ENCODE measurements at regions of chr6 and their contacts with region 1.

Region 1: DNA sequence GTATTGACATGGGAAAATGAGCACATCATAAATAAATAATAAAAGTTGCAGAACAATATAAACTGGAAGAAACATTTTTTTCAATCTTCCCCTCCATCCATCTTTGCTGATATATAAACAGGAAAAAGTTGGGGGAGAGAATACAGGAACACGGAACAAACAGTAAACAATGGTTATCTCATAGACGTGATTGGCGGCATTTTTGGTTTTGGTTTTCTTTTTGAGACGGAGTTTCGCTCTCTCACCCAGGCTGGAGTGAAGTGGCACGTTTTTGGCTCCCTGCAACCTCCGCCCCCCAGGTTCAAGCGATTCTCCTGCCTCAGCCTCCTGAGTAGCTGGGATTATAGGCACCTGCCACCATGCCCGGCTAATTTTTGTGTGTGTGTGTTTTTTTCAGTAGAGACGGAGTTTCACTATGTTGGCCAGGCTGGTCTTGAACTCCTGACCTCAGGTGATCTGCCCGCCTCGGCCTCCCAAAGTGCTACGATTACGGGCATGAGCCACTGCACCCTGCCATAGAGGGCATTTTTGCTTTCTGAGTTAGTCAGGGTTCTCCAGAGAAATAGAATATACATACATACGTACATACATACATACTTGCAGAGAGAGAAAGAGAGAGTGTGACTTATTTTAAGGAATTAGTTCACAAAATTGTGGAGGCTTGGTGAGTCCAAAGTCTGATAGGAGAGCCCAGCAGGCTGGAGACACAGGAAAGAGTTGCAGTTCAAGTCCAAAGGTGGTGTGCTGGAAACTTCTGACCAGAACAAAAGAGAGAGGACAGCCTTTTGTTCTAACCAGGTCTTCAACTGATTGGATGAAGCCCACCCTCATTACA is 22.6 kb downstream of the GNL1 start:
- DNase-seq: peak; percentile 70
- H3K4me3 Mint-ChIP-seq: peak overlapping the region; percentile 29
- H3K27ac Mint-ChIP-seq: no peak overlapping the region
- H3K4me1 Mint-ChIP-seq: peaks cover 44% of the 10 kb centered on the region
- H3K27me3 Mint-ChIP-seq: no peaks in the 10 kb centered on the region

Region 2: GRCh38 chr6:30483677-30484279 is 49.9 kb before region 1 on chr6:
- intact Hi-C with region 1: loop called (anchors 2 kb)
- DNase-seq: peak; percentile 86
- H3K4me3 Mint-ChIP-seq: no peak overlapping the region
- H3K27ac Mint-ChIP-seq: no peak overlapping the region
- H3K4me1 Mint-ChIP-seq: peaks cover 41% of the 10 kb centered on the region
- H3K27me3 Mint-ChIP-seq: peaks cover 44% of the 10 kb centered on the region

Region 3: GRCh38 chr6:30489081-30490025 is 44.3 kb before region 1 on chr6 and contains the start of gene HLA-E:
- intact Hi-C with region 1: loop called (anchors 1 kb)
- DNase-seq: peak; percentile 98
- H3K4me3 Mint-ChIP-seq: peak within 1 kb of the TSS; percentile 100
- H3K27ac Mint-ChIP-seq: peak within 1 kb of the TSS; percentile 97
- H3K4me1 Mint-ChIP-seq: peaks cover 52% of the 10 kb centered on the region
- H3K27me3 Mint-ChIP-seq: no peaks in the 10 kb centered on the region
- total RNA-seq, gene HLA-E: 484 and 488 TPM in 2 replicates

Region 4: GRCh38 chr6:30500421-30501355 is 33.0 kb before region 1 on chr6:
- intact Hi-C with region 1: loop called (anchors 1 kb)
- DNase-seq: peak; percentile 72
- H3K4me3 Mint-ChIP-seq: peak overlapping the region; percentile 54
- H3K27ac Mint-ChIP-seq: peak overlapping the region; percentile 58
- H3K4me1 Mint-ChIP-seq: peaks cover 32% of the 10 kb centered on the region
- H3K27me3 Mint-ChIP-seq: no peaks in the 10 kb centered on the region

Region 5: GRCh38 chr6:30508890-30509736 is 24.6 kb before region 1 on chr6:
- intact Hi-C with region 1: loop called (anchors 2 kb)
- DNase-seq: peak; percentile 89
- H3K4me3 Mint-ChIP-seq: peak overlapping the region; percentile 59
- H3K27ac Mint-ChIP-seq: peak overlapping the region; percentile 88
- H3K4me1 Mint-ChIP-seq: peaks cover 45% of the 10 kb centered on the region
- H3K27me3 Mint-ChIP-seq: no peaks in the 10 kb centered on the region

Region 6: GRCh38 chr6:30515932-30516753 is 17.5 kb before region 1 on chr6:
- intact Hi-C with region 1: loop called (anchors 1 kb)
- DNase-seq: peak; percentile 97
- H3K4me3 Mint-ChIP-seq: peak overlapping the region; percentile 83
- H3K27ac Mint-ChIP-seq: peak overlapping the region; percentile 97
- H3K4me1 Mint-ChIP-seq: peaks cover 44% of the 10 kb centered on the region
- H3K27me3 Mint-ChIP-seq: no peaks in the 10 kb centered on the region

Region 7: GRCh38 chr6:30814136-30815040 is 280.7 kb after region 1 on chr6:
- intact Hi-C with region 1: loop called (anchors 5 kb)
- DNase-seq: peak; percentile 85
- H3K4me3 Mint-ChIP-seq: peak overlapping the region; percentile 67
- H3K27ac Mint-ChIP-seq: peak overlapping the region; percentile 98
- H3K4me1 Mint-ChIP-seq: peaks cover 75% of the 10 kb centered on the region
- H3K27me3 Mint-ChIP-seq: peaks cover 2% of the 10 kb centered on the region

Measured in activated CD4-positive, alpha-beta T cell treated with anti-CD3 and anti-CD28 coated beads, Interleukin-2, amount 10 ng/mL, durations not matched to agents 24 days and 14 days (primary cell).